Posterior vena cava (tissue), 2 donors: ENCODE measurements at regions of chr4 and their contacts with region 1.

Region 1: DNA sequence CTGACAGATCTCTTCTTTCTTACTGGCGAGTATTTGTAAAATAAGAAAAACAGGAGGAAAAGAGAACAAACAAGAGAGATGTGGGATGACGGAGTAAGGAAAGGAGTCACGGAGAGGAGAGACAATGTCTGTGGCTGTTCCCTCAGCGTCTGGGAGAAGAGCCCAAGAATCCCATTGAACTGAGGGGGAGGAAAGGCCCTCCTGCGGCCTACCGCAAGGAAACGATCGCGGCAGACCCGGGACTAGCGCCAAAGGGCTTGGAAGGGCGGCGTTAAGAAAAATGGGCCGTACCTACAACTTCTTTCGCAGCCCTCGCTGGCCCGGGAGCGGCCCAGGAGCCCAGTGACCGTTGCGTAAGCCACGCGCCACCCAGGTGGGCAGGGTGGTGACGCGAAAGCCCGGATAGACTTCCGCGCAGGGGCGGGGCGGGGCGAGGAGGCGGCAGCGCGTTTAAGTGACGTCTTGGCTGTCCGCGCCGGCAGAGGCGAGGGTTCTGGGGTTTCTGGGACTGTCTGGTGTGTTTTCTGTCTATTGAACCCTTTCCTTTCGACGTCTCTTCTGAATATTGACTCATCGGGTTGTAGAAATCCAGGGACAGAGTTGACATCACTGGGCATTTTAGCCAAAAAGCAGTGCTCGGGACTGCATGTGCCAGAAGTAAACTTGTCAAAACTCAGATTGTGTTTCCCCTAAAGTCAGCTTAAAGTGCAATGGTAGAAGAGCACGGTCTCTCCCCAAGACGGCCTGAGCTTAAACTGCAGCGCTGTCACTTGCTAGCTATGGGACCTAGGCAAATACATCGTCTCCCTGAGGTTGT is at the start of gene SLC9B1:
- DNase-seq: peak; percentile 98
- total RNA-seq, gene SLC9B1: 1.1 to 1.4 TPM

Region 2: GRCh38 chr4:102988429-102989020 is 31.0 kb before region 1 on chr4:
- intact Hi-C with region 1: no loop called
- DNase-seq: no peak

Region 3: GRCh38 chr4:103075901-103076739 is 56.6 kb after region 1 on chr4:
- intact Hi-C with region 1: loop called in 1 of 2 experiments (anchors 10 kb)
- DNase-seq: peak; percentile 94